ENCODE measurements at regions of chr5 and their contacts with region 1.

Region 1: GRCh38 chr5:138077065-138077696 is 6.7 kb upstream of the WNT8A start:
- DNase-seq: peak in 1 of 2 donors; percentile 66
- ATAC-seq: peak; percentile 60
- H3K4me3 ChIP-seq: no peak overlapping the region
- H3K27ac ChIP-seq: no peak overlapping the region
- H3K4me1 ChIP-seq: no peaks in the 10 kb centered on the region
- H3K27me3 ChIP-seq: no peaks in the 10 kb centered on the region

Region 2: GRCh38 chr5:138132543-138132942 is 55.4 kb after region 1 on chr5:
- intact Hi-C with region 1: loop called (anchors 2 to 5 kb)
- DNase-seq: no peak
- ATAC-seq: no peak
- H3K4me3 ChIP-seq: no peak overlapping the region
- H3K27ac ChIP-seq: no peak overlapping the region
- H3K4me1 ChIP-seq: no peaks in the 10 kb centered on the region
- H3K27me3 ChIP-seq: no peaks in the 10 kb centered on the region

Region 3: DNA sequence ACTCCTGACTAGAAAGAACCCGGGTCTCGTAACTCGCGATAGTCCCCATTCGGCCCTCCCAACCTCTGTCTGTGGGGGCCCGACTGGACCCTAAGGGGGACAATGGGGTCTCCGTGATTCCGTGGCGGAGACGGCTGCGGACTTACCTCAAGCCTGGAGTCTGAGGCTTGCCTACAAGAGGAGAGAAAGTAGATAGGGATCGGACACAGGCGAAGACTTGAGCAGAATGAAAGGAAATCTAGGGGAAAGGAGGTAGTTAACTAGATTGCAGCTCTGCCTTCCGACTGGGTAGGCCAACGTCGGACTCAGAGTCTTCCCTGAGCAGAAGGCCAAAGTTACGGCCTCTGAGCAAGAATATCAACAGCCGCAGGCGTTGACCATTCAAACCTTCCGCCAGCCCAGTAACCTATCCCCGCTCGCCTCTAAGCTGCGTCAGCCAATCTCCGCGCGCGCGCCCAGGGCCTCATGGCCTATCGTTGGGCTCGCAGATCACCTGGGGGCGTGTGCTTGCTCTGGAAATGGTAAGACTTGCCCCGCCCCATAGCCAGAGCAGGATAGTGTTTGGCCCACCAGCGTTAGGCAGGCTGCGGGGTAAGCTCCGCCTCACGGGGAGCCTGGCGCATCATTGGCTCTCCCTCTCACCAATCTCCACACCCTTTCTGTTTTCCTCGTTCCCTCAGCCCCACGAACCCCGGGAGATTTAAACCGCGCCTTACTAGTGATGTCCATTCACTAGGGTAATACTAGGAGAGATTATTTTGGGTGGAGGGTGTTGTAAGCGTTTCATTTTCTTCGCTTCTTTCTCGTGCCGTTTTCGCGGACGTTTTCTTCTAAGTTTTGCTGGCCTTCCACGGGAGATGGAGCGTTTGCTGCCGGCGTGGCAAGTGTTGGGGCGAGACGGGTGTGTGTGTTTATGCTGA is 254.5 kb after region 1 on chr5 and contains the start of gene CDC25C:
- intact Hi-C with region 1: no loop called
- DNase-seq: peak; percentile 98 to 99
- ATAC-seq: peak; percentile 100
- H3K4me3 ChIP-seq: peak within 1 kb of the TSS in 1 of 2 donors; percentile 22
- H3K27ac ChIP-seq: no peak within 1 kb of the TSS
- H3K4me1 ChIP-seq: no peaks in the 10 kb centered on the region
- H3K27me3 ChIP-seq: no peaks in the 10 kb centered on the region
- total RNA-seq, gene CDC25C: not detected